OCI-LY7 (cell line): ENCODE measurements at regions of chr1 and their contacts with region 1.

Region 1: GRCh38 chr1:36609241-36610027 is 126.7 kb upstream of the CSF3R start:
- DNase-seq: peak; percentile 76
- H3K4me3 ChIP-seq: no peak overlapping the region
- H3K27ac ChIP-seq: no peak overlapping the region
- H3K4me1 ChIP-seq: no peaks in the 10 kb centered on the region
- CTCF ChIP-seq: peak; percentile 98

Region 2: DNA sequence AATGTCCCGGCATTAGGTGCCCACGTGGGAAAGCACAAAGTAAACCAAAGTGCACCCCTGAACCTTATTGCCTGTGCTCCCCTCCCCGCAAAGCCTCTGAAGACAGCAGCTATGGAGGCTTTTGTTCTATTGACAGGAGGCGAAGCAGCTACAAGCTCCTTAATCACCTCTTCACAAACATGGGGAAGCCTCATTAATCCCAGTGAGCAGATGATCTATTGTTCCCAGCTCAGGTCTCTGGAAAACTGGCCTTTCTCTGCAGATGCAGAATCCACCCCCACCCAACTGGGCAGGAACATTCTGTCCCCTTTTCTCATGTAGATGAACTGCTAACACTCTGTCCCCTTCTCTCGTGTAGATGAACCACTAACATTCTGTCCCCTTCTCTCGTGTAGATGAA is 63.8 kb after region 1 on chr1:
- CTCF ChIA-PET with region 1: no interaction called
- POLR2A ChIA-PET with region 1: no interaction called
- intact Hi-C with region 1: no loop called
- DNase-seq: no peak
- H3K4me3 ChIP-seq: no peak overlapping the region
- H3K27ac ChIP-seq: no peak overlapping the region
- H3K4me1 ChIP-seq: no peaks in the 10 kb centered on the region
- CTCF ChIP-seq: no peak

Region 3: DNA sequence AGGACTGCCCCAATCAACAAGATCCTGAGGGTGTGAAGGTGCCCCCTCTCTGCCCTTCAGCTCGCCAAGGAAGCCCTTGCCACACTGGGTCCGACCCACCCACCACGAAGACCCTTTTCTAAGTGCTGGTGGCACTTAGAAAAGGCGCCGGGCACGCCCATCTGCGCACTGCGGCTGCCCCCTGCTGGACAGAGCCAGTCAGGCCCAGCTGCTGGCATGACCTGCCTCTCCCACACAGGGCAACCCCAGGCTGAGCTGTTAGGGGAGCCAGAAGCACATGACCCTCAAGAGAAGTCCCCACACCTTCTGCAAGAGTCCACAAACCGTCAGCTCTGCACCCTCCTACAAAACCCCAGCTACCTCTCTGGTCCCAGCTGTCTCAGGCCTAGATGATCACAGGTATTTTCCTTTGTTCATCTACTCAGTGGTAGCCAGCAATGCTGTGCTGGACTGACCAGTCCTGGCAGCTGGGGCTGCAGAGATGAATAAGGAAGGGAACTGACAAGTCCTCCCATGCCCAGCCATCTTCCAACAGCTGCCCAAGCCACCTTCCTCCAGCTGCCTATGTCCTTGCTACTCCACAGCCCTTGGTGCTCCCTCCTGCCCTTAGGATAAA is 825.0 kb after region 1 on chr1:
- CTCF ChIA-PET with region 1: no interaction called
- POLR2A ChIA-PET with region 1: no interaction called
- intact Hi-C with region 1: loop called (anchors 1 kb)
- DNase-seq: peak; percentile 68
- H3K4me3 ChIP-seq: no peak overlapping the region
- H3K27ac ChIP-seq: no peak overlapping the region
- H3K4me1 ChIP-seq: no peaks in the 10 kb centered on the region
- CTCF ChIP-seq: peak; percentile 93